ENCODE measurements at regions of chr11 and their contacts with region 1.

Region 1: DNA sequence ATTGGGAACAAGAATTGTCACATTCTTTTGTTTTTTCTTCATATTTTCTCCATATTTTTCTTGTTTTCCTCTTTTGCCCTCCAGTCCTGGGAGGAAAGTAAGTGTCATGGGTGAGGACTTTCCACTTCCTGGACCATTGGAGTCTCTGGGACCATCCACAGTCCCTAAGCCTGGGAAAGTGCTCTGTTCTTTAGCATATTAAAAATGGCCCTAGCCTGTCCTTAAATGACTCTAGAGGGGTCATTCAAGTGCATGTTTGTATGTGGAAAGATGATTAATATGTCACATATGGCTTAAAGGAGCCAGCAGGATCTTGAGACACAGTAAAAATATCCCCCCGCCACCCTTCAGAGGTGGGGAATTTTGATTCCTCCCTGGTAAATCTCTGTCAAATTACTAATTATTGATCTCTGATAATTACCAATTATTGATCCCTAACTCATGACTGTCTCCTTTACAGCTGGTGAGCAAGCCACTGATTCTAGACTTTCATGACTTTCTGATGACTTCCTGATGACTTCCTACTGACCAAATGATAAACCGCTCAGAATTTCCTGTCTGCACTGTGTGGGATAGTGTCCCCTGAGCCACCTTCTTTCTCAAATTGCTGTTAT is 20.0 kb upstream of the SCGB1D1 start:
- DNase-seq: no peak
- H3K4me3 ChIP-seq: no peak overlapping the region
- H3K27ac ChIP-seq: no peak overlapping the region
- H3K4me1 ChIP-seq: peaks cover 0 to 6% (median 0%) of the 10 kb centered on the region in 4 donors
- H3K27me3 ChIP-seq: peaks cover 0 to 53% (median 0%) of the 10 kb centered on the region in 3 donors
- CTCF ChIP-seq: no peak
- EP300 ChIP-seq: no peak
- POLR2A ChIP-seq: no peak

Region 2: DNA sequence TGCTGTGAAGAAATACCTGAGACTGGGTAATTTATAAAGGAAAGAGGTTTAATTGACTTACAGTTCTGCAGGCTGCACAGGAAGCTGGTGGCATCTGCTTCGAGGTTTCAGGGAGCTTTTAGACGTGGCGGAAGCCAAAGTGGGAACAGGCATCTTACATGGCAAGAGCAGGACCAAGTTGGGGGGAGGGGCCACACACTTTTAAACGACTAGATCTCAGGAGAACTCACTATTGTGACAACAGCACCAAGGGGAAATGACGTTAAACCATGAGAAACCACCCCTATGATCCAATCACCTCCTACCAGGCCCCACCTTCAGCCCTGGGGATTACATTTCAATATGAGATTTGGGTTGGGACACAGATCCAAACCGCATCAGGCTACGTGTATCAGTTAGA is 139.9 kb after region 1 on chr11:
- intact Hi-C with region 1: loop called (anchors 5 kb)
- DNase-seq: no peak
- H3K4me3 ChIP-seq: no peak overlapping the region
- H3K27ac ChIP-seq: no peak overlapping the region
- H3K4me1 ChIP-seq: no peaks in the 10 kb centered on the region
- H3K27me3 ChIP-seq: peaks cover 0 to 37% (median 8%) of the 10 kb centered on the region in 3 donors
- CTCF ChIP-seq: no peak
- EP300 ChIP-seq: no peak
- POLR2A ChIP-seq: no peak

Region 3: DNA sequence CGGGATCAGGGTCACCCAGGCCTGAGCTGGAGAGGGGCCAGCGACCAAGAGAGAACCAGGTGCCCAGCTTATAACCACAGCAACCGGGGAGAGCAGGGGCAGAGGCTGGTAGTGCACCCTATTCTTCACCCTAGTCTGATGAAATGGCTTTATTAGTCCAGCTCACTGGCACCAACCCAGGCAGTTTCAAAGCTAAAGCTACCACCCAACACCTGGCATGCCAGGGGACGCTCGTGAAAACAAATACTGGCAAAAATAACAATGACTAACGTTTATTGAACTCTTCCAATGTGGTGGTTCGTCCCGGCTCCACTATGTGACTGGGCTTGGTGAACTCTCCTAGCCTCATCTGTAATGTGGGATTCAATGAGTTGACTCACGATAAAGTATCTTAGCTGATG is 279.4 kb after region 1 on chr11:
- intact Hi-C with region 1: no loop called
- DNase-seq: peak in 1 of 2 donors; percentile 39
- H3K4me3 ChIP-seq: no peak overlapping the region
- H3K27ac ChIP-seq: peak overlapping the region in 1 of 5 donors; percentile 35
- H3K4me1 ChIP-seq: peaks cover 18 to 26% (median 20%) of the 10 kb centered on the region in 4 donors
- H3K27me3 ChIP-seq: no peaks in the 10 kb centered on the region
- CTCF ChIP-seq: no peak
- EP300 ChIP-seq: no peak
- POLR2A ChIP-seq: no peak